ENCODE measurements at regions of chr7 and their contacts with region 1.

Region 1: GRCh38 chr7:38318803-38319416 is 45.5 kb upstream of the TARP start:
- DNase-seq: no peak
- H3K4me3 ChIP-seq: no peak overlapping the region
- H3K4me3 Mint-ChIP-seq: peak overlapping the region; percentile 70 to 87 (median 72)
- H3K27ac ChIP-seq: peak overlapping the region; percentile 31
- H3K27ac Mint-ChIP-seq: peak overlapping the region; percentile 72 to 90 (median 87)
- H3K4me1 ChIP-seq: peaks cover 36% of the 10 kb centered on the region
- H3K4me1 Mint-ChIP-seq: peaks cover 15 to 43% (median 22%) of the 10 kb centered on the region in 4 donors
- H3K27me3 ChIP-seq: no peaks in the 10 kb centered on the region
- H3K27me3 Mint-ChIP-seq: no peaks in the 10 kb centered on the region

Region 2: GRCh38 chr7:38198366-38198765 is 120.5 kb before region 1 on chr7:
- CTCF ChIA-PET with region 1: no interaction called
- POLR2A ChIA-PET with region 1: no interaction called
- intact Hi-C with region 1: no loop called
- DNase-seq: no peak
- H3K4me3 ChIP-seq: no peak overlapping the region
- H3K4me3 Mint-ChIP-seq: no peak overlapping the region
- H3K27ac ChIP-seq: no peak overlapping the region
- H3K27ac Mint-ChIP-seq: no peak overlapping the region
- H3K4me1 ChIP-seq: no peaks in the 10 kb centered on the region
- H3K4me1 Mint-ChIP-seq: peaks cover 6 to 23% (median 15%) of the 10 kb centered on the region in 4 donors
- H3K27me3 ChIP-seq: no peaks in the 10 kb centered on the region
- H3K27me3 Mint-ChIP-seq: no peaks in the 10 kb centered on the region

Region 3: GRCh38 chr7:38232502-38233366 is 86.2 kb before region 1 on chr7:
- CTCF ChIA-PET with region 1: interaction called, 3 read pairs
- POLR2A ChIA-PET with region 1: no interaction called
- intact Hi-C with region 1: loop called (anchors 5 kb)
- DNase-seq: peak; percentile 79 to 91 (median 89)
- H3K4me3 ChIP-seq: peak overlapping the region in 1 of 2 donors; percentile 38
- H3K4me3 Mint-ChIP-seq: peak overlapping the region; percentile 39 to 88 (median 82)
- H3K27ac ChIP-seq: peak overlapping the region; percentile 61
- H3K27ac Mint-ChIP-seq: peak overlapping the region; percentile 91 to 96 (median 96)
- H3K4me1 ChIP-seq: peaks cover 77% of the 10 kb centered on the region
- H3K4me1 Mint-ChIP-seq: peaks cover 27 to 96% (median 67%) of the 10 kb centered on the region in 4 donors
- H3K27me3 ChIP-seq: no peaks in the 10 kb centered on the region
- H3K27me3 Mint-ChIP-seq: no peaks in the 10 kb centered on the region

Region 4: DNA sequence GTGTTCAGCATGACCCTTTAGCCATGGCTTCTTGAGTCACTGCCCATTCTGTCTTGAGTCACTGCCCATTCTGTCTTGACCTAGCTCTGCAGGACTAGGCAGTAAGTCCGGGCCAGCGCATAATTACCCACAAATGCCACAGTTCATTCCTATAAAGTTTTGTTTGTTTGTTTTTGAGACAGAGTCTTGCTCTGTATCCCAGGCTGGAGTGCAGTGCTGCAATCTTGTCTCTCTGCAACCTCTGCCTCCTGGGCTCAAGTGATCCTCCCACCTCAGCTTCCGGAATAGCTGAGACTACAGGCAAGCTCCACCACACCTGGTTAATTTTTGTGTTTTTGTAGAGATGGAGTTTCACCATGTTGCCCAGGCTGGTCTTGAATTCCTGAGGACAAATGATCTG is 12.7 kb before region 1 on chr7:
- CTCF ChIA-PET with region 1: interaction called, 6 read pairs
- POLR2A ChIA-PET with region 1: interaction called, 11 read pairs
- intact Hi-C with region 1: loop called (anchors 2 kb)
- DNase-seq: peak in 1 of 5 donors; percentile 53
- H3K4me3 ChIP-seq: no peak overlapping the region
- H3K4me3 Mint-ChIP-seq: peak overlapping the region; percentile 36 to 82 (median 68)
- H3K27ac ChIP-seq: no peak overlapping the region
- H3K27ac Mint-ChIP-seq: peak overlapping the region; percentile 57 to 97 (median 95)
- H3K4me1 ChIP-seq: peaks cover 35% of the 10 kb centered on the region
- H3K4me1 Mint-ChIP-seq: peaks cover 0 to 27% (median 7%) of the 10 kb centered on the region in 4 donors
- H3K27me3 ChIP-seq: no peaks in the 10 kb centered on the region
- H3K27me3 Mint-ChIP-seq: no peaks in the 10 kb centered on the region